ENCODE measurements at regions of chr14 and their contacts with region 1.

Region 1: GRCh38 chr14:102071283-102071998 is 15.4 kb downstream of the HSP90AA1 start:
- DNase-seq: peak; percentile 94
- ATAC-seq: peak; percentile 89
- H3K4me3 ChIP-seq: 0 out of 4 replicates have a peak overlapping the region, but pooled peaks of 1 of the 2 experiments have one; percentile 17
- H3K27ac ChIP-seq: peak overlapping the region; percentile 98
- H3K4me1 ChIP-seq: peaks cover 31 to 36% of the 10 kb centered on the region in 2 experiments
- H3K27me3 ChIP-seq: no peaks in the 10 kb centered on the region
- CTCF ChIP-seq: no peak
- POLR2A ChIP-seq: no peak
- RAD21 ChIP-seq: peak; percentile 7; the same call in 1 of the 2 replicates

Region 2: DNA sequence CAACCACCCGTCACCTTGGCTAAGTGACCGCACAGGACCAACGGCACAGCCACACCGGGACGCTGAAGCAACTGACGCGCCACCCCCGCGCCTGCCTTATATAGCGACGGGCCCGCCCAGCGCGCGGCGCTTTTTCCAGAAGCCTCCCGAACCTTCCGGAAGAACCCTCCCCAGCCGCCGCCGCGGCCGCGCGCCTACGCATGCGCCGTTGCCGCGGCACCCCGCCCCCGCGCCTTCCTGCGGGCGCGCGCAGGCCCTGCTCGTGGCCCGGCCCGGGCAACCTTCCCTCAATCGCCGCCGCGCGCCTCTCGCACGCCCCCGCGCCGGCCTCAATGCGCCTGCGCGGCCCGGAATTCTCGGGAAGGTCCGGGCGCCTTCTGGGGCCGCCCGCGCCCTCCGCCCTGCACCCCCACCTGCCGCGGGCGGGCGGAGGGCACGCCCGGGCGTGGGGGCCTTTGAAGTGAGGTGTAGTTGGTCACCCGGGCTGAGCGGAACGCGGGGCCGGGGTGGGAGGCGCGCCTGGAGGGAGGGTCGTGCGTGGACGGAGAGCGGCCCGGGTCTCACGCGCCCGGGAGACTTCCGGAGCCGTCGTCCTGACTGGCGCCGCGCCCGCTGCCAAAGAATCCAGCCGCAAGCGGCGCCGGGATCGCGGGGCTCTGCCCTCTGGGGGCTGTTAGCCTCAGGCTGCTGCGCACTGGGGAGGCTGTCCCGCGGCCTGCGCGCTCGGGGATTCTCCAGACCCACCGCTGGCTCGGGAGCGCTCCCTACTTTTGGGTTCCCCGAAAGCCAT is 15.7 kb after region 1 on chr14 and contains the start of gene HSP90AA1:
- CTCF ChIA-PET with region 1: no interaction called
- POLR2A ChIA-PET with region 1: interaction called, 13 read pairs
- RAD21 ChIA-PET with region 1: no interaction called
- intact Hi-C with region 1: loop called (anchors 2 kb)
- DNase-seq: peak; percentile 79
- ATAC-seq: peak; percentile 83
- H3K4me3 ChIP-seq: peak within 1 kb of the TSS; percentile 70 to 85
- H3K27ac ChIP-seq: peak within 1 kb of the TSS; percentile 93
- H3K4me1 ChIP-seq: peaks cover 16 to 46% of the 10 kb centered on the region in 2 experiments
- H3K27me3 ChIP-seq: no peaks in the 10 kb centered on the region
- CTCF ChIP-seq: no peak
- POLR2A ChIP-seq: peak; percentile 99
- RAD21 ChIP-seq: no peak
- total RNA-seq, gene HSP90AA1: 1,380 TPM